MCF 10A (cell line): ENCODE measurements at regions of chr2 and their contacts with region 1.

Region 1: GRCh38 chr2:149017116-149017985 is 21.1 kb upstream of the LYPD6B start:
- DNase-seq: peak; percentile 79
- H3K4me3 Mint-ChIP-seq: no peak overlapping the region
- H3K27ac Mint-ChIP-seq: peak overlapping the region; percentile 3
- H3K4me1 Mint-ChIP-seq: no peaks in the 10 kb centered on the region
- H3K27me3 Mint-ChIP-seq: peaks cover 23% of the 10 kb centered on the region
- CTCF ChIP-seq: peak; percentile 83

Region 2: GRCh38 chr2:148933456-148933855 is 83.9 kb before region 1 on chr2:
- CTCF ChIA-PET with region 1: no interaction called
- POLR2A ChIA-PET with region 1: no interaction called
- intact Hi-C with region 1: no loop called
- DNase-seq: no peak
- H3K4me3 Mint-ChIP-seq: no peak overlapping the region
- H3K27ac Mint-ChIP-seq: no peak overlapping the region
- H3K4me1 Mint-ChIP-seq: no peaks in the 10 kb centered on the region
- H3K27me3 Mint-ChIP-seq: no peaks in the 10 kb centered on the region
- CTCF ChIP-seq: no peak

Region 3: DNA sequence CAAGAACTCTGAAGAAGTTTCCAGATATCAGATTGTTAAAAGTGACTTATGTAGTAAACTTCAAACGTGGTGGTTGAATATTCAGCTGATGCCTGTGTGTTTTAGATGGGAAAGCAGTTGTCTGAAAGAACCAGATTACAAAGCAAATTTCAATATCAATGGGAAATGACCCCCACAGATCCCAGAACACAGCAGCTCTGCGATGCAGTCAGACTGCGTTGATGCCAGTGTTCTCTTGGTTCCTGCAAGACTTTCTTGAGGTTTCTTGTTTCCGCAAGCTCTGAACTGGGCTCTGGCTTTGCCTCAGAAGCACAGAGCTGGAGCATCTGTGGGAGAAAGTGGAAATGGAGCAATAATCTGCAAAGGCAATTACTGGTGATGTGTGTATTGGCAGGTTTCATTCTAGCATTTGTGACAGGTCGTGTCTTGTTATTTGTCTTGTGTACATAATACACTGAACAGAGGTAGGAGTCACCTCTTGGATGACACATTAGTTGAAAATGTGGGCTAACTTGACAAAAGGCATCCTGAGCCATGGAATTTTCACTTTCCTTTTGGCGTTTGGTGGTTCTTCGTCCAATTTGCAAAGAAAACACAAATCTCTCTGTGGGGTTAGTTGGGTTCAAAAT is 10.4 kb after region 1 on chr2:
- CTCF ChIA-PET with region 1: interaction called, 66 read pairs
- POLR2A ChIA-PET with region 1: interaction called, 4 read pairs
- intact Hi-C with region 1: no loop called
- DNase-seq: peak; percentile 76
- H3K4me3 Mint-ChIP-seq: peak overlapping the region; percentile 25
- H3K27ac Mint-ChIP-seq: no peak overlapping the region
- H3K4me1 Mint-ChIP-seq: peaks cover 15% of the 10 kb centered on the region
- H3K27me3 Mint-ChIP-seq: no peaks in the 10 kb centered on the region
- CTCF ChIP-seq: no peak

Region 4: GRCh38 chr2:149313512-149313972 is 296.2 kb after region 1 on chr2:
- CTCF ChIA-PET with region 1: interaction called, 81 read pairs
- POLR2A ChIA-PET with region 1: interaction called, 3 read pairs
- intact Hi-C with region 1: loop called (anchors 1 kb)
- DNase-seq: peak; percentile 76
- H3K4me3 Mint-ChIP-seq: no peak overlapping the region
- H3K27ac Mint-ChIP-seq: no peak overlapping the region
- H3K4me1 Mint-ChIP-seq: peaks cover 9% of the 10 kb centered on the region
- H3K27me3 Mint-ChIP-seq: peaks cover under 1% of the 10 kb centered on the region
- CTCF ChIP-seq: peak; percentile 53

Region 5: DNA sequence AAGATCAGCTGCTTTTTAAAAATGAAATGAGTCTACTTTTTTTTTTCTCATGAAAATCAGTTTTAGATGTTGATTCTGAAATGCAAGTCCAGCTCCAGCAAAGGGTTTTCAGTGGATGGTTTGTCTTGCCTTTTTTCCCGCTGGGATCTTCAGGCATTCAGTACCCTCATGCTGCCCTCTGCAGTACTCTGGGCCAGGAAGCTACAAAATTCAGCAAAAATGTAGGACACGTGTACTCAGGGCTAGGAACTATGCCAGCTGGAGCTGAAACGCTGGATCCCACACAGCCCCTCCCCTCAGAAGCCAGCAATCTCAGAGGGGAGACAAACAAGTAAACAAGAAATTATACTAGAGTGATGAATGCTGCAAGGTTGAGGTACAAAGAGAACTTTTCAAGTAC is 472.9 kb after region 1 on chr2:
- CTCF ChIA-PET with region 1: interaction called, 3 read pairs
- POLR2A ChIA-PET with region 1: interaction called, 3 read pairs
- intact Hi-C with region 1: loop called (anchors 5 kb)
- DNase-seq: peak; percentile 12
- H3K4me3 Mint-ChIP-seq: no peak overlapping the region
- H3K27ac Mint-ChIP-seq: no peak overlapping the region
- H3K4me1 Mint-ChIP-seq: no peaks in the 10 kb centered on the region
- H3K27me3 Mint-ChIP-seq: peaks cover 24% of the 10 kb centered on the region
- CTCF ChIP-seq: no peak

Region 6: DNA sequence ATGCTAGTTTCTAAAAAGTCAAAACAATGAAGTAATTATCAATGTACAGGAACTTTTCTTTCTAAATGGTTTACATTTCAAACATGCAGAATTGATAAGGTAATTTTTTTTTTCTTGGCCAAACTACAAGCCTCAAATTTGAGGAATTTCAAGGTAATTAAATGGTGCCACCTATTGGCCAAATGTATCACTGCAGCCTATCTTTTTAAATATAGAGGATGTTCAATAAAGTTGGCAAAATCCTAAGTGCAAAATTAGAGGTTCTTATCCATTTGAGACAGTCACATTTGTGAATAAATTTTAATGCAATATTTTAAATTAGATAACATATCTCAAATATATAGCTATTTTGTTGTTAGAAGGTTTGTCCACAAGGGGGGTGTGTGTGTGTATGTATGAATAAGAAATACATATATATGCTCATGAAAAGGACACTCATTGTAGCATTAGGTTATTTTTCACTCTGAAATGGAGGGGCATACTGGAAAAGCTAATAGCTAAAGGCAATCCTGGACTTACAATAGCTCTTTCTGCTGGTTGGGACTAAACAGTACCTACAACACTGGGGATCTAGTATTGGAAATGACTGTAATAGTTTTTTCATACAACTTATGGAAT is 544.1 kb after region 1 on chr2:
- CTCF ChIA-PET with region 1: interaction called, 144 read pairs
- POLR2A ChIA-PET with region 1: interaction called, 4 read pairs
- intact Hi-C with region 1: loop called (anchors 1 kb)
- DNase-seq: peak; percentile 51
- H3K4me3 Mint-ChIP-seq: no peak overlapping the region
- H3K27ac Mint-ChIP-seq: no peak overlapping the region
- H3K4me1 Mint-ChIP-seq: no peaks in the 10 kb centered on the region
- H3K27me3 Mint-ChIP-seq: no peaks in the 10 kb centered on the region
- CTCF ChIP-seq: peak; percentile 68

Region 7: DNA sequence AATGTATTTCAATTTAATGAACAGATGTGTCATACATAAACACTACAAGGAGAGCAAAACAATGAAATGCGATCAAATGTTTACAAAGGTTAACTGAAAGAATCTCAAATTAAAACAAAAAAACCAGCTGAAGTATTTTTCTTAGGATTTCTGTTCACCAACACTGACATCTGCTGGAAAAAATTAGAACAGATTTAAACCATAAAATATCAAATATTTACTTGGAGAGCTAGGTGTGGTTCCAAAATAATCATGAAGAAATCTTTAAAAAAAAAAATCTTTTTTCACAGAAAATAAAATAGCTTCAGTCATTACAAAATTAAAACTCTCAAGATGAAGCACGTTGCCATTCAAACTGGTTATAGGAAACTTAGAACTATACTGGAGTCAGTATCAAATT is 556.4 kb after region 1 on chr2:
- CTCF ChIA-PET with region 1: interaction called, 44 read pairs
- POLR2A ChIA-PET with region 1: no interaction called
- intact Hi-C with region 1: no loop called
- DNase-seq: no peak
- H3K4me3 Mint-ChIP-seq: no peak overlapping the region
- H3K27ac Mint-ChIP-seq: no peak overlapping the region
- H3K4me1 Mint-ChIP-seq: peaks cover 6% of the 10 kb centered on the region
- H3K27me3 Mint-ChIP-seq: no peaks in the 10 kb centered on the region
- CTCF ChIP-seq: peak; percentile 35